ENCODE measurements at regions of chr21 and their contacts with region 1.

Region 1: DNA sequence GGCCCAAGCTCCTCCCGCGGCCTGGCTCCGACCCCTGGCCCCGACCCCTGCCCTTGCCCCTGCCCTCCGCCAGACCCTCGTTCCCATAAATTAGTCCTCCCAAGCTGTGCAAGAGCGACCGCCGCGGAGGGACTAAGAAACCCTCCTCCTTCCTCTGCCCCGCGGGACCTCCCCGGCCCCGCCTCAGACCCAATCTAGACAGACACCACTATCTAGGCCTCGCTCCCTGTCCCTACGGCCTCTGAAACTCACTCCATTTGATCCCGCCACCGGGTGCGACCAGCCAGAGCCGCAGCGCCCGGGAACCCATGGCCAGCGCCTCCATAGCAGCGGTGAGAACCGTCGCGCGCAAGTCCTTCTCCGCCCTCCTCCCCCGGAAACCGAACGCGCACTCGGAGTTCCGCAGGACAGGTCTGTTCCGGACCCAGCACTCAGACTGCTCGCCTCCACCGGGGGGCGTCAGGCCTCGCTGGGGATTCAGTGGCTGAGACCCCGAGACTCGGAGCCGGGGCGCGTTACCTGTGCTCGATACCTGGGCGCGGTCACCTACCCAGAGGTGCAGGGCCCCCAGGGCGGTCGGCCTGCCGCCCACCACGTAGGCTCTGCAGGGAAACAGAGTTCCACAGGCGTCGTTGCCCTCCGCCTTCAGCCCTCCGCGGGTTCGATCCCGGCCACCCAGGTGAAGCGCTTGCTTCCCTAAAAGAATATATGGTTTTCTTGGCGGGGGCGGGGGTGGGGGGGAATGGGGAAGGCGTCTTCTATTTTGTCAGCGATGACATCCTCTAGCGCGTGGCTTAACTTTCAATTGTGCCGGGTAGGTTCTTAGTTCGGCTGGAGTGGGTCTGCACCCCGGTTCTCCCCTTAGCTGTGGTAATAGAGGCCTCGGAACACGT is at the start of gene MRPL39:
- DNase-seq: peak; percentile 95
- ATAC-seq: peak; percentile 95
- H3K4me3 Mint-ChIP-seq: peak within 1 kb of the TSS; percentile 97
- H3K27ac Mint-ChIP-seq: peak within 1 kb of the TSS; percentile 100
- H3K4me1 Mint-ChIP-seq: peaks cover 37% of the 10 kb centered on the region
- H3K27me3 Mint-ChIP-seq: no peaks in the 10 kb centered on the region
- total RNA-seq, gene MRPL39: 78.4 to 84.5 TPM

Region 2: GRCh38 chr21:25039461-25040380 is 567.7 kb before region 1 on chr21:
- CTCF ChIA-PET with region 1: no interaction called
- POLR2A ChIA-PET with region 1: no interaction called
- intact Hi-C with region 1: loop called in 1 of 2 experiments (anchors 5 kb)
- DNase-seq: no peak
- ATAC-seq: no peak
- H3K4me3 Mint-ChIP-seq: no peak overlapping the region
- H3K27ac Mint-ChIP-seq: no peak overlapping the region
- H3K4me1 Mint-ChIP-seq: no peaks in the 10 kb centered on the region
- H3K27me3 Mint-ChIP-seq: peaks cover 2% of the 10 kb centered on the region

Region 3: DNA sequence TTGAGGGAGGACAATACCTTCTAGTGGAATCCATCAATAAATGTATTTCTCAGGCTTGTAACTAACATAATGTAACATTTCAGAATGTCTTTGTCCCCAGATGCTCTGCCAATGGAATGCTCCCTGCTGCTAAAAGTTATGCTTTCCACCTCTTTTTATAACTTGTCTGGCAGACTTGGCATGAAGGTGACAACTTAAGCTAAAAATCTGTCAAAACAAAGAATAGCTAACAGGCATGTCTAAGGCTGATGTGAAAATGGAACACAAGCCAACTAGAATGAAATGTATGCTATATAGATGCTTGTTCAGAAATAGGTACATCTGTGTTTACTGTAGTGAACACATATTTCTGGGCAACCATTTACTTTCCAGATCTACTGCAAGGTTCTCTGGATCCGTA is 468.0 kb before region 1 on chr21:
- CTCF ChIA-PET with region 1: no interaction called
- POLR2A ChIA-PET with region 1: no interaction called
- intact Hi-C with region 1: no loop called
- DNase-seq: no peak
- ATAC-seq: no peak
- H3K4me3 Mint-ChIP-seq: no peak overlapping the region
- H3K27ac Mint-ChIP-seq: no peak overlapping the region
- H3K4me1 Mint-ChIP-seq: no peaks in the 10 kb centered on the region
- H3K27me3 Mint-ChIP-seq: no peaks in the 10 kb centered on the region

Region 4: GRCh38 chr21:25626757-25627156 is 19.4 kb after region 1 on chr21:
- CTCF ChIA-PET with region 1: interaction called, 14 read pairs
- POLR2A ChIA-PET with region 1: no interaction called
- intact Hi-C with region 1: no loop called
- DNase-seq: no peak
- ATAC-seq: no peak
- H3K4me3 Mint-ChIP-seq: no peak overlapping the region
- H3K27ac Mint-ChIP-seq: no peak overlapping the region
- H3K4me1 Mint-ChIP-seq: no peaks in the 10 kb centered on the region
- H3K27me3 Mint-ChIP-seq: no peaks in the 10 kb centered on the region

Region 5: DNA sequence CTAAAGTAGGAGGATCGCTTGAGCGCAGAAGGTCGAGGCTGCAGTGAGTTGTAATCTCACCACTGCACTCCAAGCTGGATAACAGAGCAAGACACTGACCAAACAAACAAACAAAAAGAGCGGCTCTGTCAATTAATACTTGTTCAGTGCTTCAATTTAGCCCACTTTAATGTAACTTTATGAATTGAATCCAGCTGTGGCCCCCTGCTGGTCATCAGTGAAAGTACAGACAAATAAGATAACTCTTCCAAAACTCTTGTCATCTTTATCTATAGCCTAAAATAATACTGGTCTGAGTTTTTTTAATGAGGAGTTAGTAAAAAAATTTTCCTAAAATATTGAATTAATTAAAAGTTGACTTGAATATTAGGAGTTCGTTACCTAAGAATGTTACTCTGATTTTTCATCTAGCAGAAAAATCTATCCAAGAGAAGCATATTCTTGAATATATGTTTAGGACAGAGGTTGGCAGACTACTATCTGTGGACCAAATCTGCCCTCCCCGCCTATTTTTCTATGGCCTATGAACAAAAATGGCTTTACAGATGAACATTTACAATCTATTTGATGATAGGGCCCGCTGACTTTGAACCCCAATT is 101.2 kb after region 1 on chr21:
- CTCF ChIA-PET with region 1: interaction called, 47 read pairs
- POLR2A ChIA-PET with region 1: no interaction called
- intact Hi-C with region 1: loop called (anchors 1 kb)
- DNase-seq: peak; percentile 60
- ATAC-seq: no peak
- H3K4me3 Mint-ChIP-seq: no peak overlapping the region
- H3K27ac Mint-ChIP-seq: no peak overlapping the region
- H3K4me1 Mint-ChIP-seq: no peaks in the 10 kb centered on the region
- H3K27me3 Mint-ChIP-seq: no peaks in the 10 kb centered on the region

Region 6: GRCh38 chr21:25801217-25802014 is 194.0 kb after region 1 on chr21:
- CTCF ChIA-PET with region 1: interaction called, 16 read pairs
- POLR2A ChIA-PET with region 1: no interaction called
- intact Hi-C with region 1: loop called (anchors 1 kb)
- DNase-seq: peak; percentile 95
- ATAC-seq: peak; percentile 100
- H3K4me3 Mint-ChIP-seq: no peak overlapping the region
- H3K27ac Mint-ChIP-seq: no peak overlapping the region
- H3K4me1 Mint-ChIP-seq: peaks cover 5% of the 10 kb centered on the region
- H3K27me3 Mint-ChIP-seq: peaks cover 6% of the 10 kb centered on the region

Region 7: GRCh38 chr21:26170471-26171257 is 563.3 kb after region 1 on chr21 and contains the start of gene APP:
- CTCF ChIA-PET with region 1: interaction called, 4 read pairs
- POLR2A ChIA-PET with region 1: no interaction called
- intact Hi-C with region 1: loop called in 1 of 2 experiments (anchors 1 kb)
- DNase-seq: peak; percentile 93
- ATAC-seq: peak; percentile 76
- H3K4me3 Mint-ChIP-seq: peak within 1 kb of the TSS; percentile 90
- H3K27ac Mint-ChIP-seq: peak within 1 kb of the TSS; percentile 83
- H3K4me1 Mint-ChIP-seq: peaks cover 22% of the 10 kb centered on the region
- H3K27me3 Mint-ChIP-seq: peaks cover 3% of the 10 kb centered on the region
- total RNA-seq, gene APP: 59.8 to 71.1 TPM